Posterior cingulate gyrus (tissue), 11 donors: ENCODE measurements at regions of chr12 and their contacts with region 1.

Region 1: DNA sequence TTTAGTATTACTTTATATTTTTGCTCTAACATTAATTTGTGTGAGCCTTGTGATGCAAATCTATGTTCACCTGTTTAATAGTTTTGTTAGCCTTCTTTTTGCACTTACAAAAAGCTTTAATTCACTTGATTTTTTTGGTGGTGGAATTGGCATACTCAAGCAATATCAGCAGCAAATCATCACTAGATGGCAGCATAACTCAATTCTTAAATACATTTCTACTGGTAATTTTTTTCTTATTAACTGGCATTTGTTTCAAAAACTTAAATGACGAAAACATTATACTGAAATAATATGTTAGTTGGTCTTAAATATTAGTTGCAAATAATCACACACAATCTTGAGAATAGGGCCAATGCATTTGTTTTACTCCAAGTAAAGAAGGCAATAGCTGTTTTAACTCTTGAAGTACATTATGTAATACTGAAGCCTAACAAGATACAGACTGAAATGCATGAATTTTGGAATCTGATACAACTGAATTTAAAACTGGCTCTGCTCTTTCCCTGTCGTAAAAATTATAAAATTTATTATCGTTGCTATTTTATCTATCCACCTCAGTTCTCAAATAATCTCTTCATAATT is 151.5 kb downstream of the ATXN7L3B start:
- DNase-seq: no peak

Region 2: DNA sequence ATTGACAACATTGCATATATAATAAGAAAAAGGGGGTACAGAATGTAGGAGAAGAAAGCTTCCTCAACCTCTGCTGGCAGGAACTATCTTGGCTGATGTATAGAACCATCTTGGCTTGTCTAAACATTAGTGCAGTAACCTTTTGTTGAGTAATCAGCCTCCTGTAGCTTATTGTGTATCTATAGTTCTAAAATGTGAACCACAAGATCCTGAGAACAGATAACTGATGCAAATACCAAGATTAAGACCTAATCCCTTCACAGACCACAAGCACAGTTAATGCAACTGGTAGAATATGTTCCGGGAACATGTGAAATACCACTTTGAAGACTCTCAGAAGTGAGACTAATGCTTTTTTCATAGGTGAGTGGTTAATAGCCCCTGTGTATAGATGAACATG is 571.1 kb after region 1 on chr12:
- intact Hi-C with region 1: no loop called
- DNase-seq: no peak

Region 3: GRCh38 chr12:75289753-75290152 is 600.6 kb after region 1 on chr12:
- intact Hi-C with region 1: loop called (anchors 2 kb)
- DNase-seq: no peak

Region 4: DNA sequence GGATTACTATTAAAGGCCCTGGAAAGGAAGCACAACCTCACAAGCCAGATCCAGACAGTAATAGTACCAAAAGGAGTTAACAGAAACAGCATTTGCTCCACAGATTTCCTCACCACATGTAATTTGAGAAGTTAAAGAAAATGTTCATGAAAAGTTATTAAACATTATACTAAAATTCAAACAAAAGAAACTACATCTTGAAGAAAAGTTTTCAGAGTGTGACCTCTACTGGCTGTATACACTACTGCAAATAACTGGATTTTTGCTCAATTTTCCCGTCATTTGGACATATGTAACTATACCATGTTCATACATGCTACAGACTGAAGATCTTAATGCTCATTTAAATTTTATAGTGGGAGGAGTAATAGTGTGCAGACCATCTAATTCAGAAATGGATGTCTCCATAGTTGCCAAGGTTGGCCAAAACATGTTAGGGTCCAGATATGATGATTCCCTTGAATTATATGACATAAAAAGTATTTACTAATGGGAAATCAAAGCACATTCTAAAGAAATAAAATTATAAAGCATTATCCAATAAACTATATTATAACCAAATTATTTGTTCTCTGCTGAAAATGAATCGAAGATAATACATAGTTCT is 816.6 kb after region 1 on chr12:
- intact Hi-C with region 1: loop called (anchors 10 kb)
- DNase-seq: no peak